ENCODE measurements at regions of chr3 and their contacts with region 1.

Region 1: DNA sequence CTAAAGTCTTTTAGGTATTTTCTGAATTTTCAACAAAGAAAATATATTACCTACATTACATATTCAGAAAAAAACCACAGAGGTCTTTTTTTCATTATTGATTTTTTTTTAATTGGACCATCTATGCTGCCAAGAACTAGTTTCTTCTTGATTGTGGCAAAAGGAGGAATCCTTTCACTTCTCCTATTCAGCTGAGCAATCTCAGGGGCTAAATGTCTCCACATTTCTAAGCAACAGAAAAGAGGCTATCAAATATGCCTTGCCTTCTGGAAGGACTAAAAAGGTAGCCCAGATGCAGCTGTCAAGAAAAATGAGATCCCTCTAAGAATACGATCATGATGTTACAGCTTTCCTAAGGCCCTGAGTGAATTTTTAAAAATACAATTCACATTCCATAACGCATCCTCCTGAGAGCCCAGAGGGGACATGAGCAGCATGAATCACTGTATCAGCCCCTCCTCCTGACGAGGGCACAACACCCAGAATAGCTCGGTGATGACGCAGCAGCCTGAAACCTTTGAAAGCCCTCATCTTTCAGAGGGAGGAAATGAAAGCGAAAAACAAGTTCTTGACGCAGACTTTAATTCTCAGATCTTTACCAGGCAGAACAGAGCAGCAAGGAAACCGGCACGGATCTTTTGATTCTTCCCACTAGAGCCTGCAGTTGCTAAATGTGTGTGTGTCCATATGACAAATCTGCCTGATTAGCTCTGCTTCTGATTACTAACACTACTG is 24.6 kb downstream of the RUBCN start:
- DNase-seq: peak; percentile 83 to 95 (median 91)
- ATAC-seq: peak; percentile 94 to 98 (median 96)
- H3K4me3 ChIP-seq: peak overlapping the region in 10 of 12 donors; percentile 15 to 58 (median 47)
- H3K27ac ChIP-seq: peak overlapping the region; percentile 77 to 97 (median 92)
- H3K4me1 ChIP-seq: peaks cover 0 to 33% (median 20%) of the 10 kb centered on the region in 12 donors
- H3K27me3 ChIP-seq: no peaks in the 10 kb centered on the region
- CTCF ChIP-seq: peak in 1 of 12 donors; percentile 4
- POLR2A ChIP-seq: peak in 1 of 2 donors; percentile 71

Region 2: GRCh38 chr3:197736491-197737318 is 24.6 kb after region 1 on chr3 and contains the start of gene RUBCN:
- intact Hi-C with region 1: loop called in 2 of 10 experiments (anchors 1 to 2 kb)
- DNase-seq: peak; percentile 96 to 97 (median 97)
- ATAC-seq: peak; percentile 98 to 99 (median 99)
- H3K4me3 ChIP-seq: peak within 1 kb of the TSS; percentile 84 to 99 (median 92)
- H3K27ac ChIP-seq: peak within 1 kb of the TSS; percentile 61 to 94 (median 89)
- H3K4me1 ChIP-seq: peaks cover 4 to 34% (median 17%) of the 10 kb centered on the region in 12 donors
- H3K27me3 ChIP-seq: no peaks in the 10 kb centered on the region
- CTCF ChIP-seq: peak in 1 of 12 donors; percentile 16
- POLR2A ChIP-seq: peak in 1 of 2 donors; percentile 85
- total RNA-seq, gene RUBCN: 22.9 to 53.4 (median 36.9) TPM

Region 3: GRCh38 chr3:197749601-197750395 is 37.7 kb after region 1 on chr3 and contains the start of gene FYTTD1:
- intact Hi-C with region 1: loop called in 6 of 10 experiments (anchors 2 to 5 kb)
- DNase-seq: peak; percentile 92 to 97 (median 94)
- ATAC-seq: peak; percentile 84 to 95 (median 92)
- H3K4me3 ChIP-seq: peak within 1 kb of the TSS; percentile 68 to 98 (median 86)
- H3K27ac ChIP-seq: peak within 1 kb of the TSS; percentile 95 to 99 (median 96)
- H3K4me1 ChIP-seq: peaks cover 11 to 66% (median 40%) of the 10 kb centered on the region in 12 donors
- H3K27me3 ChIP-seq: no peaks in the 10 kb centered on the region
- CTCF ChIP-seq: peak; percentile 30 to 76 (median 54)
- POLR2A ChIP-seq: peak in 1 of 2 donors; percentile 81
- total RNA-seq, gene FYTTD1: 49.1 to 93.6 (median 76.3) TPM

Region 4: GRCh38 chr3:197791113-197791891 is 79.2 kb after region 1 on chr3 and contains the start of gene LRCH3:
- intact Hi-C with region 1: loop called in 1 of 10 experiments (anchors 10 kb)
- DNase-seq: peak; percentile 81 to 93 (median 86)
- ATAC-seq: peak; percentile 64 to 91 (median 90)
- H3K4me3 ChIP-seq: peak within 1 kb of the TSS; percentile 45 to 95 (median 86)
- H3K27ac ChIP-seq: peak within 1 kb of the TSS; percentile 78 to 98 (median 96)
- H3K4me1 ChIP-seq: peaks cover 0 to 38% (median 23%) of the 10 kb centered on the region in 12 donors
- H3K27me3 ChIP-seq: no peaks in the 10 kb centered on the region
- CTCF ChIP-seq: peak in 1 of 12 donors; percentile 3
- POLR2A ChIP-seq: peak in 1 of 2 donors; percentile 75
- total RNA-seq, gene LRCH3: 17.9 to 40.3 (median 28.6) TPM

Measured in heart left ventricle (tissue), 16 donors.